SK-N-SH (cell line): ENCODE measurements at regions of chr15 and their contacts with region 1.

Region 1: DNA sequence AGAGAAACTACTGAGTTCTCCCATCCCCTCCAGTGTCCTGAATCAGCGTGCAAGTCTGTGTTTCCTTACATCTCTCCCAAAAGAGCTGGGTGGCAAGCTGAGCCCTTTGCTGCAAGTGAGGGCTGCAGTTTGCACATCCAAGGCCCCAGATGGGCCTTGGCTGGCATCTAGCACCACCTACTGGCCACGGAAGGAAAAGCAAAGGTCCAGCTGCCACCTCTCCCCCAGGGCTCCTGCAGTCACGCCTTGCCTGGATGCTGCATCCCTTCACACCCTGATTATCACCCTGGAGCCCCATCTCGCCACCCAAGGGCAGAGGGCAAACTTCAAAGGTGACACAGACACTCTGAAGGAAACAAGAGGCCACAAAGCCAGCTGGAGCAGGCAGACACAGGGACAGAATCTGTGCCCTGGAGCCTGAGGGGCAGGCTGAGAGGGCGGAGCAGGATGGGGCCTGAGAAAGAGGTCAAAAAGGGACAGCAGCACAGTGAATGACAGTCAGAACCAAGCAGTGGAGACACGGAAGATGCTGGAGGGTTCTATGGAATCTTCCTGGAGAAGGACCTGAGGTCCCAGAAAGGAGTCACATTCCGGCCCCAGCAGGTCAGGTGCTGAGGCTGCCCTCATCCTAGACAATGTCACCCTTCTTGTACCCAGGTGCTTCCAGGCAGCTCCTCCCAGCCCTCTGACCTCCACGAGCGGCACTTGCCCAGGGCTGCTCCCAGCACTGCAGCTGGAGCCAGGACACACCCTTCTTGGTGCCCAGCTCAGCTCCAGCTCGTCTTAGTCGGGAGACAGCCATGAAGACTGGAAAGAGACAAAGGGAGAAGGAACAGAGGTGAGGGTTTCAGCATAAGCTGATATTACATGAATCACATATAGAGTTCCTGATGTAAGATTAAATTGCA is 18.3 kb upstream of the NTRK3 start:
- DNase-seq: peak; percentile 87
- H3K4me3 ChIP-seq: peak overlapping the region in 1 of 2 experiments; percentile 55; a peak in 1 of 4 replicates
- H3K27ac ChIP-seq: no peak overlapping the region
- H3K4me1 ChIP-seq: no peaks in the 10 kb centered on the region; a peak in 1 of 4 replicates
- H3K27me3 ChIP-seq: no peaks in the 10 kb centered on the region
- CTCF ChIP-seq: peak; percentile 81
- EP300 ChIP-seq: no peak
- RAD21 ChIP-seq: peak; percentile 90

Region 2: DNA sequence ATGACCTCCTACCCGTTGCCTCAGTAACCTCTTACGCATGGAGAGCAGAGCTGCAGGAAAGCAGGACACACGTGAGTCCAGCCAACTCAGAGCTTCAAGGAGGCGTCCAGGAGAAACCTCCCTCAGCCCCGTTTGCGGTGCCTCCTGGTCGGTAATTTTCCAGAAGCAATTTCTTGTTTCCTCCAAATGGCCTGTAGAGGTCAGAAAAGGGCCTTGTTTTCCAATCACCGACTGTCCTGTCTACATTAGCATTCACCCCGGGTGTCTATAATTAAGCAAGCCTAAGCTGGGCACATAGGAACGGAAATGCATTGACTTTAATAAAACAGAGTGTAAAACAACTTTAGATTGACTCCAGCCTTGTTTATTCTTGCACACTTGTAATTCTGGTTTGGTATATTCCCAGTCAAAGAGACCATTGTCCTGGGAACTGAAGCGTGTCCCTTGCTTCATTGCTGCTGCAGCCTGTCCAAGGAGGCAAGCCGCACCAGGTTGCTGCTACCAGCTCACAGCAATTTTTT is 1358.9 kb before region 1 on chr15:
- CTCF ChIA-PET with region 1: interaction called, 15 read pairs
- POLR2A ChIA-PET with region 1: no interaction called
- DNase-seq: peak; percentile 65
- H3K4me3 ChIP-seq: no peak overlapping the region
- H3K27ac ChIP-seq: no peak overlapping the region
- H3K4me1 ChIP-seq: no peaks in the 10 kb centered on the region; a peak in 1 of 4 replicates
- H3K27me3 ChIP-seq: no peaks in the 10 kb centered on the region
- CTCF ChIP-seq: peak; percentile 62
- EP300 ChIP-seq: no peak
- RAD21 ChIP-seq: peak; percentile 83

Region 3: GRCh38 chr15:87033056-87033455 is 1241.8 kb before region 1 on chr15:
- CTCF ChIA-PET with region 1: interaction called, 13 read pairs
- POLR2A ChIA-PET with region 1: no interaction called
- DNase-seq: no peak
- H3K4me3 ChIP-seq: no peak overlapping the region
- H3K27ac ChIP-seq: no peak overlapping the region
- H3K4me1 ChIP-seq: no peaks in the 10 kb centered on the region; a peak in 1 of 4 replicates
- H3K27me3 ChIP-seq: no peaks in the 10 kb centered on the region
- CTCF ChIP-seq: peak; percentile 54
- EP300 ChIP-seq: no peak
- RAD21 ChIP-seq: peak; percentile 76

Region 4: DNA sequence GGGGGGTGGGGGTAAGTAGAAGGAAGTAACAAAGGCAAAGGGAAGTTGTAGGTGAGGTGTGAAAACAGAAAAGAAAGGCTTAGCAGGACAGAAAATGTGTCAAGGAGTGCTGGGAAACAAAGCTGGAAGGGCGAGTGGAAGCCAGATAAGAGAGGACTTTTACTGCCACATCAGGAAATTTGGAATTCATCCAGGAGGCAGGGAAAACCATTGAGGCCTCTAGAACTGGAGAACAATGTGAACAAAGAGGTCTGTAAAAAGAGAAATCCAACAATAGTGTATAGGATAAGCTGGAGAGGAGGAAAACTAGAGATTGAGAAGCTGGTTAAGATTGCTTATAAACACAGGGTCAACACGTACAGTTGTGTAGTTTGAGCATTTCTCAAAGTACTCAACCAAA is 134.9 kb before region 1 on chr15:
- CTCF ChIA-PET with region 1: no interaction called
- POLR2A ChIA-PET with region 1: no interaction called
- DNase-seq: no peak
- H3K4me3 ChIP-seq: no peak overlapping the region
- H3K27ac ChIP-seq: no peak overlapping the region
- H3K4me1 ChIP-seq: no peaks in the 10 kb centered on the region
- H3K27me3 ChIP-seq: no peaks in the 10 kb centered on the region
- CTCF ChIP-seq: no peak
- EP300 ChIP-seq: no peak
- RAD21 ChIP-seq: no peak

Region 5: DNA sequence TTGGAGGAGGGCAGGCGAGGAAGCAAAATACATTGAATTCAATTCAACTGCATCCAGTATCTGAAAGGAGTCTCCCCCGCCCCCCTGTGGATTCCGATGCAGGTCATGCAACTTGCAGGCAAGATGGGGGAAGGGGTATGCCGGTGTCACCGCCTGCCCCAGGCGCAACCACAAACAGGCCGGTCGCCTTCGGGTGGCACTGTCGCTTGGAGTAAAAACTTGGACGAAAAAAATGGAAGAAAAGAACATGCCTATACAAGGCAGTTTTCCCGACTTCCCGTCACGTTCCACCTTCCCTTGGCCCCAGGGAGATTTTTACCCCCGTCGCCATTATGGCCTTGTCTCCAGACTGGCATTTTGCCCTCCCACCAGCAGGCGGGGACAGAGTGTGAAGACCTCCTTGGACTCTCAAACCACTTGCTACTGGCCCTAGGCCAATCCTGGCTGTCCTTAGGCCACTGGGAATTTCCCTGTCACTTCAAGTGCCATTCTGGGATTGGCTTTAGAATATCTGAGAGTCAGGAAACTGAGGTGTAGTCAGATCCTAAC is 16.6 kb before region 1 on chr15:
- CTCF ChIA-PET with region 1: interaction called, 40 read pairs
- POLR2A ChIA-PET with region 1: no interaction called
- DNase-seq: peak; percentile 66
- H3K4me3 ChIP-seq: peak overlapping the region in 1 of 2 experiments; percentile 64; a peak in 2 of 4 replicates
- H3K27ac ChIP-seq: no peak overlapping the region
- H3K4me1 ChIP-seq: peaks cover 0 to 18% of the 10 kb centered on the region in 2 experiments; a peak in 1 of 4 replicates
- H3K27me3 ChIP-seq: peaks cover 32% of the 10 kb centered on the region; the same call in 1 of the 2 replicates
- CTCF ChIP-seq: peak; percentile 38; the same call in 1 of the 2 replicates
- EP300 ChIP-seq: no peak
- RAD21 ChIP-seq: 0 out of 2 replicates have a peak, but pooled peaks have one; percentile 8

Region 6: GRCh38 chr15:88299497-88299896 is 24.7 kb after region 1 on chr15:
- CTCF ChIA-PET with region 1: interaction called, 31 read pairs
- POLR2A ChIA-PET with region 1: no interaction called
- DNase-seq: peak; percentile 37
- H3K4me3 ChIP-seq: no peak overlapping the region
- H3K27ac ChIP-seq: no peak overlapping the region
- H3K4me1 ChIP-seq: peaks cover 0 to 5% of the 10 kb centered on the region in 2 experiments; a peak in 1 of 4 replicates
- H3K27me3 ChIP-seq: no peaks in the 10 kb centered on the region
- CTCF ChIP-seq: no peak
- EP300 ChIP-seq: no peak
- RAD21 ChIP-seq: no peak

Region 7: DNA sequence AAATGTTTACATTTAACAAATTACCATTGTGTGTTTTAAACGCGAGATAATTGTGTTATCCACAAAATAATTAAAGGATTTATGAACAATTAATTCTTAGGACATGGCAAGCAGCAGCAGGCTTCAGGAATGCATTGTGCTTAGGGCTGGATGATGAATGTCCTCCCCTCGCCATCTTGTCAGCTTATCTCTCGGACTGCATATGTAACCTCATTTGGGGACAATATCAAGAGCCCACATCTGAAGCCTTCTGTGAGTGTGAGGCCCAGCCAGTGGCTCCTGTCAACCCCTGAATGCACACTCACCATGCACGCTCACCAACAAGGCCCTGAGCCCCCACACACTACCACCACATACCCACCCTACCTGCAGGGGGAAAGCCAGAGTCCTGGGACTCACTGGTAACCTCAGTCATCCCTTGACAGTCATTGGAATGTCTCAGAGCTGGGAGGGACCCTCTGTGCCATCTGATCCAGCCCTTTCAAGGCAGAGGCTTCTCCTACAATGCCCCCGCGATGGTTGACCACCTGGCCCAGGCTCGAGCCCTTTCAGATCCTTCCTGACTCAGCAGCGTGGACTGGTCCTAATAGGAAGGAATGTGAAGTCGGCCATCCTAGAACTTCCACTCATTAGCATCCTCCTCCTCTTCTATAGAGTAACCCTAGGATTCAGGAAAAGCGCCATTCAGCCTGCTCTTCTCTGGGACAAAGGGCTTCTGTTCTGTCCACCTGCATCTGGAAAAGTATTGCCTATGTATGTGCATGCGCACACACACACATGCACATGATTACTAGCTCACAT is 154.2 kb after region 1 on chr15:
- CTCF ChIA-PET with region 1: interaction called, 11 read pairs
- POLR2A ChIA-PET with region 1: no interaction called
- DNase-seq: peak; percentile 69
- H3K4me3 ChIP-seq: no peak overlapping the region
- H3K27ac ChIP-seq: no peak overlapping the region
- H3K4me1 ChIP-seq: peaks cover 0 to 22% of the 10 kb centered on the region in 2 experiments; a peak in 2 of 4 replicates
- H3K27me3 ChIP-seq: no peaks in the 10 kb centered on the region
- CTCF ChIP-seq: no peak
- EP300 ChIP-seq: peak in 1 of 2 experiments; percentile 87; a peak in 2 of 4 replicates
- RAD21 ChIP-seq: 0 out of 2 replicates have a peak, but pooled peaks have one; percentile 8

Region 8: GRCh38 chr15:88620995-88621772 is 346.4 kb after region 1 on chr15 and contains the start of gene AEN:
- CTCF ChIA-PET with region 1: no interaction called
- POLR2A ChIA-PET with region 1: no interaction called
- DNase-seq: peak; percentile 99
- H3K4me3 ChIP-seq: peak within 1 kb of the TSS; percentile 87 to 93
- H3K27ac ChIP-seq: peak within 1 kb of the TSS; percentile 84 to 89
- H3K4me1 ChIP-seq: peaks cover 17 to 18% of the 10 kb centered on the region in 2 experiments
- H3K27me3 ChIP-seq: no peaks in the 10 kb centered on the region
- CTCF ChIP-seq: no peak; the same call in 1 of the 2 replicates
- EP300 ChIP-seq: no peak
- RAD21 ChIP-seq: no peak
- polyA plus RNA-seq, gene AEN: 46.4 and 65.2 TPM in 2 replicates